T-cell (primary cell): ENCODE measurements at regions of chr19 and their contacts with region 1.

Region 1: DNA sequence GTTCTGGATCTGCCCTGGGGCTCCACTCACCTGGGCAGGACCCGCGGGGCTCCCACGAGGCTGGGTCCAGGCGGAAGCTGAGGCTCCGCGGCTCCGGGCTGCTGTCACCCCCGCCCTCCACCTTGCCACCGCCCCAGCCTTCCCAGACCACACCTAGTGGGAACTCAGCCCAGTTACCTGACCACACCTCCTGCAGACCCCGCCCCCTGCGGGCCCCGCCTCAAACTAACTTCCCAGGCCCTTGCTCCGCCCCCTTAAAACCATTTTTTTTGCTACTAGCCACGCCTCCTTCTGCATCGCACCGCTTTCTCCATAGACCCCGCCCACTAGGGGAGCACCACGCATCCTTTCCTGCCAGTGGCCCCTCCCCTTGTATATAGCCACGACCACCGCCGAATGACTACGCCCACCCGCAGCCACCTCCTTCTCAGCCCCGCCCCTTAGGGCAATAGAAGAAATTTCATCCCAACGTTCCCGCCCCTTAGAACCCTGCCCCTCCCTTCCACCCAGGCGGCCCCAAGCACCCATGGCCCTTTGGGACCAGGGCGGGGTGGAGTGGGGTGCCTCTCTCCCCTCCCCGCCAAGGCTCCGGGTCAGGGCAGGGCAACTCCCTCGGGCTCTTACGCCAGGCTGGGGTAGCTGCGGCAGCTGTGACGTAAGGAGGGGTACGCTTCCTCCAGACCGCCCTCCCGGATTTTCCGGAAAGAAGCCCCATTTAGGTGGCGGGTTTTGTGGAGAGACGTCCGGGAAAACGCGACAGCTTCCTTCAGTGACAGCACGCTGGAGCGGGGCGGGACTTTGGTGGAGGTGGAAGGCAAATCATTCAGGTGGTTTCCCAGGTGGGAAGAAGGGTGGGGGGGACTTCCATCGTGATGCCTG is at the start of gene SH2D3A:
- DNase-seq: peak; percentile 87 to 97 (median 92)
- ATAC-seq: peak; percentile 74 to 87 (median 82)
- H3K4me3 ChIP-seq: peak within 1 kb of the TSS; percentile 70 to 87
- H3K4me3 Mint-ChIP-seq: peak within 1 kb of the TSS; percentile 87 to 89 (median 87)
- H3K27ac ChIP-seq: peak within 1 kb of the TSS; percentile 96
- H3K27ac Mint-ChIP-seq: peak within 1 kb of the TSS; percentile 93 to 94
- H3K4me1 ChIP-seq: peaks cover 17 to 59% of the 10 kb centered on the region in 2 experiments
- H3K4me1 Mint-ChIP-seq: peaks cover 41 to 48% (median 41%) of the 10 kb centered on the region in 3 donors
- H3K27me3 ChIP-seq: no peaks in the 10 kb centered on the region
- H3K27me3 Mint-ChIP-seq: no peaks in the 10 kb centered on the region
- total RNA-seq, gene SH2D3A: 61.7 to 83.7 (median 73.6) TPM

Region 2: DNA sequence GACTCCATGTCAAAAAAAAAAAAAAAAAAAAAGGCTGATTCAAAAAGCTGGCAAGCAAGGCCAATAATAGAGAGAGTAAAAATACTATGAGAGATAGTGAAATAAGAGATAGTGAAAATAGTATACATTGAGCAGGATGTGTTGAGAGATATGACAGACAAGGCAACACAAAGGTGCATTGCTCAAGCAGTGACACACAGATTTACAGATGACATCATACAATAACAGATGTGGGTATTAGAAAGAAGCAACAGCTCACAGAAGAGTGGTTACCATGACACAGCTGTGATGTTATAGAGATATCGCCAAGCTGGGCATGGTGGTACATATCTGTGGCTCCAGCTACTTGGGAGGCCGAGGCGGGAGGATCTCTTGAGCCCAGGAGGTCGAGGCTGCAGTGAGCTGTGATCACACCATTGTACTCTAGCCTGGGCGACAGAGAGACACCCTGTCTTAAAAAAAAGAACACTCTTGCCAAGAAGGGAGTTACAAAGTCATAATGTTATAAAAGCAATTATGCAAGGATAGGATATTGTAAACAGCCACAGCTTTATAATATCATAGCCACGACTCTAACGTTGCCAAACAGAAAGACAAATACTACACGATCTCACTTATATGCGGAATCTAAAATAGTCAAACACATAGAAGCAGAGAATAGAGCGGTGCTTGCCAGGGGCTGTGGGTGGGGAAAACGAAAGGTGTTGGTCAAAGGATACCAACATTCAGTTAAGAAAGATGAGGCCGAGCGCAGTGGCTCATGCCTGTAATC is 226.5 kb before region 1 on chr19:
- CTCF ChIA-PET with region 1: no interaction called
- POLR2A ChIA-PET with region 1: no interaction called
- DNase-seq: no peak
- ATAC-seq: no peak
- H3K4me3 ChIP-seq: no peak overlapping the region
- H3K4me3 Mint-ChIP-seq: no peak overlapping the region
- H3K27ac ChIP-seq: no peak overlapping the region
- H3K27ac Mint-ChIP-seq: no peak overlapping the region
- H3K4me1 ChIP-seq: peaks cover 5 to 32% of the 10 kb centered on the region in 2 experiments
- H3K4me1 Mint-ChIP-seq: peaks cover 12 to 22% (median 14%) of the 10 kb centered on the region in 3 donors
- H3K27me3 ChIP-seq: peaks cover 0 to 17% of the 10 kb centered on the region in 2 experiments
- H3K27me3 Mint-ChIP-seq: peaks cover 0 to 2% of the 10 kb centered on the region in 2 donors

Region 3: DNA sequence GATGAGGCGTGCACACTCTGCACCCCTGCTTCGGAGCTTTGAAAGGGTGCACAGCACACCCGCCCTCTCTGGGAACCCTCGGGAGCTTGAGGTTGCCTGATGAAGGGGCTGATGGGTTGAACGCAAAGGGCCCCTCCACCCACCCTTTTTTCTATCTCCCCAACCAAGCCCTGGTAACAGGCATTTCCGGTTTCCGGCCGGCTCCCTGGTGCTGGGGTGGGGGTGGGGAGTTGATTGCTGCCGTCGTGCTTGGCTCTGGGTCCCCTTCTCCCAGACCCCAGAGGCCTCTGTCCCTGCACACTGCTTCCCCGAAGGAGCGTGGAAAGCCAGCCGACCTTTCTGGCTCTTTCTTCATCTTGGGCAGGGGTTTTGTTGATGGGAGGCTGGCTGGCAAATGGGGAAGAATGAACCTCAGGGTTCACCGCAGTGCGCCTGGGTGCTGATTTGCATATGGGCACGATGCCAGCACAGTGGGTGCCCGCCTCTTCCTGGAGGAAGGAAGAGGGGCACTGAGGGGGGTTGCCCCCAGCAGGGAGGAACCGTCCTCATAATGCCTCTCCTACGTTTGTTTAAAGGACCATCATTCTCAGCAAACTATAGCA is 34.0 kb after region 1 on chr19:
- CTCF ChIA-PET with region 1: interaction called in 1 of 2 experiments, 3 read pairs
- POLR2A ChIA-PET with region 1: interaction called, 5 to 13 read pairs
- DNase-seq: peak; percentile 68 to 91 (median 77)
- ATAC-seq: peak; percentile 73 to 88 (median 84)
- H3K4me3 ChIP-seq: peak overlapping the region; percentile 51 to 54
- H3K4me3 Mint-ChIP-seq: peak overlapping the region; percentile 75 to 87 (median 84)
- H3K27ac ChIP-seq: peak overlapping the region; percentile 80
- H3K27ac Mint-ChIP-seq: peak overlapping the region; percentile 94 to 98
- H3K4me1 ChIP-seq: peaks cover 26 to 79% of the 10 kb centered on the region in 2 experiments
- H3K4me1 Mint-ChIP-seq: peaks cover 62 to 71% (median 68%) of the 10 kb centered on the region in 3 donors
- H3K27me3 ChIP-seq: no peaks in the 10 kb centered on the region
- H3K27me3 Mint-ChIP-seq: no peaks in the 10 kb centered on the region

Region 4: DNA sequence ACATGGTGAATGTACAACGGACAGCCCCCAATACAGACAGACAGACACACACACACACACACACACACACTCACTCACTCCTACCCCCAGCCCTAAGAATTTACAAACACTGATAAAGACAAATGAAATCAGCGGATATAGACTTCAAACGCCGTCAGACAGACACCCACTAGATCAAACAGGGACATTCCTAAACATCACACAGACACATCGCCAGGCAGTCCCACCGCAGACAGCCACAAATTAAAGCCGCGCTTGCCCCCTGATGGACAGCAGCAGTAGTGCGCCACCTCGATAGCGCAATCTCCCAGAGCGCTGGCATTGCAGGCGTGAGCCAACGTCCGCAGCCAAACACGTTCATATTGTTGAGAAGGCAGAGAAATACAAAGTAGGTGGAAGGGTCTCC is 95.1 kb after region 1 on chr19:
- CTCF ChIA-PET with region 1: interaction called in 1 of 2 experiments, 7 read pairs
- POLR2A ChIA-PET with region 1: interaction called, 8 to 10 read pairs
- DNase-seq: peak; percentile 80 to 95 (median 87)
- ATAC-seq: peak; percentile 87 to 92 (median 90)
- H3K4me3 ChIP-seq: peak overlapping the region; percentile 41 to 62
- H3K4me3 Mint-ChIP-seq: peak overlapping the region; percentile 69 to 86 (median 85)
- H3K27ac ChIP-seq: peak overlapping the region; percentile 54
- H3K27ac Mint-ChIP-seq: peak overlapping the region; percentile 66 to 83
- H3K4me1 ChIP-seq: peaks cover 5 to 20% of the 10 kb centered on the region in 2 experiments
- H3K4me1 Mint-ChIP-seq: peaks cover 18 to 32% (median 28%) of the 10 kb centered on the region in 3 donors
- H3K27me3 ChIP-seq: no peaks in the 10 kb centered on the region
- H3K27me3 Mint-ChIP-seq: no peaks in the 10 kb centered on the region